Right ventricle myocardium inferior (tissue), 1 donor: ENCODE measurements at regions of chr15 and their contacts with region 1.

Region 1: GRCh38 chr15:101251830-101252820 is at the start of gene CHSY1:
- DNase-seq: peak; percentile 97
- ATAC-seq: peak; percentile 86
- total RNA-seq, gene CHSY1: 13.3 TPM

Region 2: DNA sequence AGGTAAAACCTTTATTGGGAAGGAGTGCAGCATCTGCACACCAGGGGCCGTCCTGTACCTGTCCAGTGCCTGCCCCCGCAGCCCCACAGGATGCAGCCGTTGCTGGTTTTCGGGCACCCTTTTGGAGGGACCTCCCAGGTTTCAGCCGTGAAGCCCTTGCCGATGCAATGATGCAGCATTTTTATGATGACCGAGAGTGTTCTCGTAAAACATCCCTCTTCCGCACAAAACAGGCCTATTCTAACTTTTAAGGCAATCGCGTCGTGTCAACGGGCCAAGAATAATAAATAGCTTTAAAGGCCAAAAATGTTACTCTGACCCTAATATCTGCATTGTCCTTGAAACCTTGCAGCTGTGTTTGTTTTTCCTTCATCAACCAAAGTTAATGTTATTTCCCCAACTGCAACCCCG is 206.9 kb before region 1 on chr15:
- intact Hi-C with region 1: no loop called
- DNase-seq: peak; percentile 69
- ATAC-seq: peak; percentile 58

Region 3: DNA sequence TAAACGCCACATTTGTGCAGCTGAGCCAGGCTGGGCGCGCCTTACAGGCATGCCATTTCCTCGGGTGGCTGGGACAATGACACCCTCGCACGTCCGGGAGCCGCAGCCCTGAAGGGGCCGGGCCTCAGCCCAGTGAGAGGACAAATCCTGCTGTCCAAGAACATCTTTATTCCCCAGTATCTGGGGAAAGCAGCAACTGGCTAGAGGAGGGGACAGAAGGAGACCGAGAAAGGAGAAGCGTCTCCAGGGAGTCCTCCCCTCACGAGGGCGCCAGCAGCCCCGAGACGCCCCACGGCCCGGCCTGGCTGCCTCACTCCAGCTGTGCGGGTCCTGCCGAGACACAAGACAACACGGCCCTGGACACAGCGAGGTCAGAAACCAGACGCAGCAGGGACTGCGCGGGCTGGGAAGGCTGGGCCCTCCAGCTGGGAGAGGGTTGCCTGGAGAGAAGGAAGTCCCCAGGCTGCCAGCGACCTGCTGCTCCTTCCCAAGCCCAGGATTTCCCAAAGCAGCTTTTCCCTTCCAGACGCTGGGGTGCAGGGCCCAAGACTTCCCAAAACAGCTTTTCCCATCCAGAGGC is 130.5 kb before region 1 on chr15:
- intact Hi-C with region 1: loop called (anchors 1 kb)
- DNase-seq: peak; percentile 91
- ATAC-seq: peak; percentile 92